WTC11 (cell line): ENCODE measurements at regions of chr1 and their contacts with region 1.

Region 1: DNA sequence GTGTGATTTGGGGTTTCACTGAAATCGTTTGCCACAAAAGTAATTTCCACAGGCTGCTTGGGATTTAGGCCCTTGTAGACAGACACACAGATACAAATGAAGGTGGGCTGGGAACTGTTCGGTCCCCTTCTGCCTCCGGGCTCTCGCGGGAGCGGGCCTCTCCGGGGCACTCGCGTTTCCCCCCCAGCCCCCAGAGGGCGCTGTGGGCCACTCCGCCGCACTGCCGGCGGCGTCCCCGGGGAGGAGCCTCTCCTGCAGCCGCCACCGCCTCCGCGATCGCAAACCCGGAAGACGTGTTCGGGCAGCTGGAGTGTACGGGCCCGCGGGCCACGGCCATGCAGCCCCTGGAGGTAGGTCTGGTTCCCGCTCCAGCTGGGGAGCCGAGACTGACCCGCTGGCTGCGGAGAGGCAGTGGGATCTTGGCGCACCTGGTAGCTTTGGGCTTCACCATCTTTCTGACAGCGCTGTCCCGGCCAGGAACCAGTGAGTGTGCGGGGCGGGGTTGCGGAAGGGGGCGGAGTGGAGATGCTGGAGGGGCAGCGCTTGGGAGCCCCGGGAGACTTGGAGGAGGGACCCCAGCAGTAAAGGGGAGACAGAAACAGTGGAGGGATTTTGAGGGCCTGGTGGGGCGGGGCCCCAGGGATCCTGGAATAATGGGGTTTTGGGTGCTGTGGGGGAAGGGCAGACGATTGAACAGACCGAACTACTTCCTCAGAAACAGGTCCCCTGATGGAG is at the start of gene CYB561D1:
- DNase-seq: peak; percentile 90
- ATAC-seq: peak; percentile 81
- H3K4me3 Mint-ChIP-seq: peak within 1 kb of the TSS; percentile 90
- H3K27ac Mint-ChIP-seq: 0 out of 2 replicates have a peak within 1 kb of the TSS, but pooled peaks have one; percentile 60
- H3K4me1 Mint-ChIP-seq: peaks cover 22% of the 10 kb centered on the region
- H3K27me3 Mint-ChIP-seq: no peaks in the 10 kb centered on the region
- CTCF ChIP-seq: peak; percentile 84
- total RNA-seq, gene CYB561D1: 5.1 to 6.7 TPM (median 6.5 TPM) in 3 replicates

Region 2: DNA sequence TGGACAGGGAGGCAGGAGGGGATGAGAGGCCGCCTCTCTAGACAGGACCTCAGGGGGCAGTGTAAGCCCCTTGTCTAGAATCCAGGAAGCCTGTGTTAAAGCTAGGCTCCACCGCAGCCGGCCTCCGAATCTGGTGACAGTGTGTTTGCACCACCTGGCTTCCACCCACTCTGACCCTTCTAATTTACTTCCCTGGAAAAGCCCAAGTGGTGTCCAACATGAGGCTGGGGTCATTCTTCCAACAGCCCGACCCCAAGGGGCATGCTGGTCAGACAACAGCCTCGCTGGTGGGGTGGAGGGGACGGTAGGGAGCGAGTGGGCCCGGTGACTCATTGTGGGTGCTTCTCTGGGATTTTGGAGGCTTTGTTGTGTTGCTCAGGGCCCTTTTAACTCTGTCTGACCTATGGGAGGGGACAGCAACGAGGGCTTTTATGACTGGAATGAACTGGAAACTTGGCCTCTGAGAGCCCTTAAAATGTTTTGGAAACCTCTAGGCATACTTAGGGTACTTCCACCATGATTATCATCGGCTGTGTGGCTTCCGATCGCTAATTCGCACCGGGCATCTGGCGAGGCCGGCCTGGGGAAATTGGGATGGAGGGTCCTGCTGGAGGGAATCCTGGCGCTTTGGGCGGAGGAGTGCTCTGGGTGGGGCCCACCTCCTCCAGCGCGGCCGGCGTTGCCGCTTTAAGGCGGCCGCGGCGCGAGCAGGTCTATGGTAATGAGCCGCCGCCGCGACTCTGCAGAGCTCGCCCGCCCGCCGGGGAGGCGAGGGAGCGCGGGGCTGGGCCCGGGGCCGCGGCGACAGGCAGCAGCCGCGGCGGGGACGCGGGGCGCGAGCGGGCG is 245.0 kb before region 1 on chr1 and contains the start of gene CELSR2:
- CTCF ChIA-PET with region 1: interaction called, 13 read pairs
- POLR2A ChIA-PET with region 1: no interaction called
- DNase-seq: peak; percentile 88
- ATAC-seq: peak; percentile 84
- H3K4me3 Mint-ChIP-seq: peak within 1 kb of the TSS; percentile 63
- H3K27ac Mint-ChIP-seq: no peak within 1 kb of the TSS
- H3K4me1 Mint-ChIP-seq: peaks cover 24% of the 10 kb centered on the region
- H3K27me3 Mint-ChIP-seq: peaks cover 36% of the 10 kb centered on the region
- CTCF ChIP-seq: no peak
- total RNA-seq, gene CELSR2: 26.8 to 31.3 TPM (median 28.2 TPM) in 3 replicates

Region 3: DNA sequence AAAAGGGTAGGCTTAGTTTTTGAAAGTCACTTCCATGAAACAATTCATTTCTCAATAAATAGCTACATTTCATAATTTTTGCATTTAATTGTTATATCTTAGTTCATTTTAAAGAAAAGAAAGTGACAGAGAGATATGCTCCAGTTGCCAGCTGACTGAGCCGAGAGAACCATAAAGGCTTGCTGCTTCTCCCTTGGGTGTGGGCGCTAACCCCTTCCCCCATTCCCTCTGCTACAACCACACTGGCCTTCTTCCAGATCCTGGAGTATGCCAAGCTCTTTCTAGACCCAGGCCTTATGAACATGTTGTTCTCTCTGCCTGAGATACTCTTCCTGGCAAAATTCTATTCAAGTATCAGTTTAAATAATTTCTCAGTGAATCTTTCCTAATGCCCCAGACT is 108.6 kb before region 1 on chr1:
- CTCF ChIA-PET with region 1: no interaction called
- POLR2A ChIA-PET with region 1: no interaction called
- DNase-seq: no peak
- ATAC-seq: no peak
- H3K4me3 Mint-ChIP-seq: no peak overlapping the region
- H3K27ac Mint-ChIP-seq: 0 out of 2 replicates have a peak overlapping the region, but pooled peaks have one; percentile 32
- H3K4me1 Mint-ChIP-seq: peaks cover 33% of the 10 kb centered on the region
- H3K27me3 Mint-ChIP-seq: no peaks in the 10 kb centered on the region
- CTCF ChIP-seq: no peak

Region 4: DNA sequence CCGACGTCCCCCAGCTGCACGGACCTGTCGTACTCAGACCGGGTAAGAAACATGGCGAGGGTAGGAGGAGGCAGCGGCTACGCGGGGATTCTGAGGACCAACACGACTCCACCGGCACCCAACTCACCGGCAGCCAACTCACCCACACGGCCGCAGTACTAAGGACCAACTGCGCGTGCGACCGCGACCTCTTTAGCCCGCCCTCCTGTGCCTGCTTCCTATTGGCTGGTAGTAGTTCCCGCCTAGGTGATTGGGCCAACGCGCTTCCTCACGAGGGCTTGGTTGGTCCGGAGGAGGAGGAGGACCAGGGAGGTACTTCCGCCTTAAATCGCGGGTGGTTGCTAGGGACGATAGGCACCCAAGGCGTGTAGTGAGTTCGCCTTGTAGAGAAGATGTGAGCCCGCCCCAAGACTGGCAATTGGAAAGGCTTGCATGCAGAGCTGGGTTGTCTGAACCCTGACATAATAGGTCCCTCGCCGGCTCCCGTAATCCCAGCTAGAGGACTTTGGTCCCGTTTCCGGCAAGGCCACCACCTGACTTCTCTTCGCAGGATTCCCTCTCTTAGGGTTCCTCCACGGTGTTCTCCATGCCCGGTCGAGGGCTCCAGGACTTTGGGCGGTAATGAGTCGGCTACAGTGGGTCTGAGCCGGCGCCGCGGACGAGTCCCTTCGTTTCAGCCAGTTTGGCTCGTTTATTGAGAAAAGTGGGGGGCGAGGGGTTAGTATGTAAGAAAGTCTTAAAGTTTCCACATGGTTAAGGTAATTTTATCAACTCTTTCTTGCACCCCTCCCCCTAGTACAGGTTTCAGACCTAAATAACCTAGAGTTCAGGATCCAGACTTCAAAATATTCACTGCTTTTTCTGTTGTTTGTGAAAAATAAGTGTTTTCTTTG is 67.4 kb before region 1 on chr1 and contains the start of gene PSMA5:
- CTCF ChIA-PET with region 1: interaction called, 15 read pairs
- POLR2A ChIA-PET with region 1: interaction called, 3 read pairs
- DNase-seq: peak; percentile 93
- ATAC-seq: peak; percentile 98
- H3K4me3 Mint-ChIP-seq: peak within 1 kb of the TSS; percentile 88
- H3K27ac Mint-ChIP-seq: peak within 1 kb of the TSS; percentile 90
- H3K4me1 Mint-ChIP-seq: peaks cover 27% of the 10 kb centered on the region
- H3K27me3 Mint-ChIP-seq: no peaks in the 10 kb centered on the region
- CTCF ChIP-seq: no peak
- total RNA-seq, gene PSMA5: 115 to 150 TPM (median 119 TPM) in 3 replicates

Region 5: GRCh38 chr1:109468903-109469302 is 25.1 kb before region 1 on chr1:
- CTCF ChIA-PET with region 1: interaction called, 10 read pairs
- POLR2A ChIA-PET with region 1: no interaction called
- DNase-seq: no peak
- ATAC-seq: no peak
- H3K4me3 Mint-ChIP-seq: no peak overlapping the region
- H3K27ac Mint-ChIP-seq: no peak overlapping the region
- H3K4me1 Mint-ChIP-seq: peaks cover 25% of the 10 kb centered on the region
- H3K27me3 Mint-ChIP-seq: peaks cover 57% of the 10 kb centered on the region
- CTCF ChIP-seq: no peak

Region 6: DNA sequence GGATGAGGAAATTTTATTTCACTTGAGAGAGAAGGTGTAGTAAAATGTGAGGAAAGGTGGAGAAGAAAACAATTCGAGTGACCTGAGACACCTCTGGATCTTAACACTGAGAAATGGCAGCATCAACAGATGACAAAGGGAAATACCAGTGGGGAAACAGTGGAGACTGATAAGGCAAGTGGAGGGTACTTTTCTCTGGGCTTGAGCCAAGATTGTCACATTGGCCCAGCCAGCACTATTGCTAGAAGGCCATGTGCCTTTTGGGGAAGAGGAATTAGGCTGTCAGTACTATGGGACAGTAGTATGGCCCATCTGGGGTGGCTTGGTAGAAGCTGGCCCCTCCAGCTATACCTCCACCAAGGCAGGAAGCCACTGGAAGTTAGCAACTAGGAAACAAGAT is 19.3 kb before region 1 on chr1:
- CTCF ChIA-PET with region 1: interaction called, 17 read pairs
- POLR2A ChIA-PET with region 1: no interaction called
- DNase-seq: no peak
- ATAC-seq: no peak
- H3K4me3 Mint-ChIP-seq: no peak overlapping the region
- H3K27ac Mint-ChIP-seq: no peak overlapping the region
- H3K4me1 Mint-ChIP-seq: no peaks in the 10 kb centered on the region; the same call in 1 of the 2 replicates
- H3K27me3 Mint-ChIP-seq: peaks cover 21% of the 10 kb centered on the region
- CTCF ChIP-seq: no peak

Region 7: GRCh38 chr1:109483672-109484518 is 10.1 kb before region 1 on chr1 and contains the start of gene ATXN7L2:
- CTCF ChIA-PET with region 1: interaction called, 30 read pairs
- POLR2A ChIA-PET with region 1: interaction called, 7 read pairs
- DNase-seq: peak; percentile 91
- ATAC-seq: peak; percentile 61
- H3K4me3 Mint-ChIP-seq: peak within 1 kb of the TSS; percentile 85
- H3K27ac Mint-ChIP-seq: peak within 1 kb of the TSS; percentile 89
- H3K4me1 Mint-ChIP-seq: peaks cover 30% of the 10 kb centered on the region
- H3K27me3 Mint-ChIP-seq: no peaks in the 10 kb centered on the region; the same call in none of the 2 replicates
- CTCF ChIP-seq: no peak
- total RNA-seq, gene ATXN7L2: 8.9 to 11.1 TPM (median 10.9 TPM) in 3 replicates

Region 8: DNA sequence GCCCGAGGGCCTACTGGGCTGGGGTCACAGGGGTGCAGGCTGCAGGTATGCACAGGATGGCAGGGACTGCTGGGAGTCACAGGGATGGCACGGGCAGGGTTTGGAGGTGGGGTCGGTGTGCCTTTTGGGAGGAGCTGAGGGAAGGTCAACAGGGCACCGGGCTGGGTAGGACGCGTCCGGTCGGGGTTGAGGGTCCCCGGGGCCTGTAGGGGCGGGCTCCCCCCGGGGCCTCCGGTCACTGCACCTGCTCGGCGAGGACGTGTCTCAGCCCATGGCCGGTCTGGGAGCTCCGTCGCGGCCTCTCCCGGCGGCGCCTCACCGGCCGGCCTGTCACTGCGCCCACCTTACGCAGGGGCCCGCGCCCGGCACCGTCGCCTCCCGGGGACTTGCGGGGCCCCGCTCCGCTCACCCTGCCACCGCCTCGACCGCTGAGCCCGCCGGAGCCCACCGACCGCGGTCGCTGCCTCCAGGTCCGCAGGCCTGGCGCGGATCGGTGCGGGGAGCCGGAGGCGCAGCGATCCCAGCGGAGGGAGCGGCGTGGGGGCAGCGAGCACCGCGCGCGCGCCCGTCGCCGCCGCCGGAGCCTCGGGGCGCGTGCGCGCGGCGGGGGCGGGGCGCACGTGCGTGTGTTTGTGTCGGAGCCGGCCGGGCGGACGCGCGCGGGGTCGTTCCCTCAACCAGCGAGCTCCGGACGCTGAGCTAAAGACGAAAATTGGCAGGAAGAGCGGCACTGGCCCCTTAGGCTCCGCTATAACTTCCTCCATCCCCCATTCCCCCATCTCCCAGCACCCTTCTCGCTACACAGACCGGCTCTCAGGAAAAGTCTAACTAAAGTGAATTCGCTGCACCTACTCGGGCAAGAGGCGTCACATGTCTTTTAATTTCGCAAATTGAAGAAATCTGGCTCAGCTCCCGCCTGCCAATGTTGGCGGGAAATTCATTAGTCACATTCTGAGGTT is 15.5 kb after region 1 on chr1 and contains the start of gene AMIGO1:
- CTCF ChIA-PET with region 1: interaction called, 93 read pairs
- POLR2A ChIA-PET with region 1: interaction called, 4 read pairs
- DNase-seq: peak; percentile 70
- ATAC-seq: peak; percentile 74
- H3K4me3 Mint-ChIP-seq: peak within 1 kb of the TSS; percentile 89
- H3K27ac Mint-ChIP-seq: no peak within 1 kb of the TSS
- H3K4me1 Mint-ChIP-seq: peaks cover 16% of the 10 kb centered on the region
- H3K27me3 Mint-ChIP-seq: peaks cover 54% of the 10 kb centered on the region
- CTCF ChIP-seq: no peak
- total RNA-seq, gene AMIGO1: 2.4 to 3.0 TPM (median 3.0 TPM) in 3 replicates